K562 (cell line): ENCODE measurements at regions of chr12 and their contacts with region 1.

Region 1: DNA sequence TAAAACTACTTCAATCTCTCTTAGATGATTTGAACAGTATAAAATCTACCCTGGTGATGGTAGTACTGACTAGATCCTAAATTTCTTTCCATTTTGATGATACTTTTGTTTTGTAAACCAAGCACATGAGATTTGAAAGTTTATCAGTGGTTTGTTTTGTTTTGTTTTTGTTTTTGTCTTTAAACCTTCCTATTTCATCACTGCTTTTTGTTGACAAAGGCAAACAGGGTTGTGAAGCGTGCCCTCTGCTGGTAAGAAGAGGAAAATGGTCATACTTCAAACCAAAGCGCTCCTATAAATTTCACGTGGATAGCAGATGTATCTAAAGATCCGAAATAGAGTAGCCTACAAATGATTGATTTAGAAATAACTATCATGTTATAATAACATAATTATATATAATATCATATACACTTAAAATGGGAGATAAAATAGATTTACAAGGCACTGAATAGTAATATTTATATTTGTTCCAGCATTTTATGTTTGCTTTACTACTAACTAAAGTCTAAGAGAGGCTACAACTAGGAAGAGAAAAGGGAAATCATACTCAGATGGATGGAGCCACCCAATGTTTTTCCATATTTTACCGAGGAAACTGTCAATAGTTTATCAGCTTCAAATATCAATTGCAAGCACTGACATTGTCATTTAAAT is 254.0 kb upstream of the USP15 start:
- DNase-seq: peak; percentile 36 to 49 (median 38)
- ATAC-seq: peak; percentile 73
- H3K4me3 ChIP-seq: no peak overlapping the region
- H3K27ac ChIP-seq: no peak overlapping the region
- H3K4me1 ChIP-seq: no peaks in the 10 kb centered on the region
- H3K27me3 ChIP-seq: no peaks in the 10 kb centered on the region
- CTCF ChIP-seq: peak; percentile 35 to 67 (median 63); a peak in 5 of 6 replicates
- EP300 ChIP-seq: no peak
- POLR2A ChIP-seq: no peak
- RAD21 ChIP-seq: peak; percentile 51 to 62

Region 2: DNA sequence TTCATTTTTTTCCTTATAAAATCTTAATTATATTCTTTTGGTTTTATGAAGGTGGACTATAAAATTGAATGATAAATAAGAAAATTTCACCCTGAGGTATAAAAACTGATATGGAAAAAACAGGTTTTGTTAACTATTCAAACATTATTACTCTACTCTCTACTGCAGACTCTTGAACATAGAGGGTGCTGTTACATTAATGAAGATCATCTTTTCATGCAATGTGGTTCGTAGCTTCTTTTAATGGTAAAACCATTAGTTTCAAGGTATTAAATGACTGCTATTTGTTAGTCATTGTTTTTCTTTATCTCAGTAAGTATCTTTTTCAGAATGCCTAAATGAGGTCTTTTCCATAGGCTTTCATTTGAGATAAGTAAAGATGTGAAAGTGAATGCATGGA is 1900.0 kb before region 1 on chr12:
- CTCF ChIA-PET with region 1: no interaction called
- POLR2A ChIA-PET with region 1: no interaction called
- in situ Hi-C with region 1: no loop called
- intact Hi-C with region 1: loop called (anchors 10 kb)
- DNase-seq: peak in 1 of 4 experiments; percentile 13
- ATAC-seq: peak; percentile 83
- H3K4me3 ChIP-seq: no peak overlapping the region
- H3K27ac ChIP-seq: no peak overlapping the region
- H3K4me1 ChIP-seq: no peaks in the 10 kb centered on the region
- H3K27me3 ChIP-seq: no peaks in the 10 kb centered on the region
- CTCF ChIP-seq: peak in 2 of 3 experiments; percentile 5 to 58; a peak in 3 of 6 replicates
- EP300 ChIP-seq: no peak
- POLR2A ChIP-seq: no peak
- RAD21 ChIP-seq: peak; percentile 62 to 72

Region 3: DNA sequence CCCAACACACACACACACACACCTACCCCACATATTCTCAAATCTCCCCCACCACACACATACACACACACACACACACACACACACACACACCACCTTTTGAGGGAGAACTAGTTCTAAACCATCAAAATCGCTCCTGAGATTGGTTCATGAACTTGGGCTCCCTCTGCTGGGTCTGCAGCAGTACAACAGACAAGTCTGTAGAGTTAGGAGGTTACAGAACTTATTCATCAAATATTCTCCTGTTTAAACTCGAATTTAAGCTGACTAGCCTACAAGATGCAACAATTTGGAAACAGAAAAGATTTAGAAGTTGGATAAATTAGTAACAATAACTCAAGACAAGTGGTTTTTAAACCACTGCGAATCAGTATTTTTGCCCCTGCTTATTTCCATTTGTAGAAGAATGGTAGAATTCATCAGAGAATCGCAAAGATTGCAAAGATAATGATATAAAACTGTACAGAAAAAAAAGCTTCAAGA is 117.6 kb after region 1 on chr12:
- CTCF ChIA-PET with region 1: no interaction called
- POLR2A ChIA-PET with region 1: no interaction called
- in situ Hi-C with region 1: no loop called
- intact Hi-C with region 1: loop called (anchors 10 kb)
- DNase-seq: peak; percentile 32 to 61 (median 33)
- ATAC-seq: peak; percentile 88
- H3K4me3 ChIP-seq: no peak overlapping the region
- H3K27ac ChIP-seq: no peak overlapping the region
- H3K4me1 ChIP-seq: no peaks in the 10 kb centered on the region
- H3K27me3 ChIP-seq: no peaks in the 10 kb centered on the region
- CTCF ChIP-seq: peak; percentile 45 to 73 (median 71); a peak in 5 of 6 replicates
- EP300 ChIP-seq: no peak
- POLR2A ChIP-seq: no peak
- RAD21 ChIP-seq: peak; percentile 57 to 73

Region 4: GRCh38 chr12:62192180-62192902 is 186.1 kb after region 1 on chr12:
- CTCF ChIA-PET with region 1: no interaction called
- POLR2A ChIA-PET with region 1: no interaction called
- in situ Hi-C with region 1: no loop called
- intact Hi-C with region 1: loop called (anchors 10 kb)
- DNase-seq: peak; percentile 50 to 74 (median 62)
- ATAC-seq: peak; percentile 99
- H3K4me3 ChIP-seq: no peak overlapping the region
- H3K27ac ChIP-seq: no peak overlapping the region
- H3K4me1 ChIP-seq: peaks cover 0 to 18% of the 10 kb centered on the region in 2 experiments; a peak in 2 of 5 replicates
- H3K27me3 ChIP-seq: peaks cover 0 to 8% of the 10 kb centered on the region in 2 experiments; a peak in 2 of 5 replicates
- CTCF ChIP-seq: peak; percentile 30 to 83 (median 73); a peak in 5 of 6 replicates
- EP300 ChIP-seq: peak; percentile 10; the same call in 1 of the 2 replicates
- POLR2A ChIP-seq: no peak
- RAD21 ChIP-seq: peak; percentile 81 to 84